Heart left ventricle (tissue), 16 donors: ENCODE measurements at regions of chr3 and their contacts with region 1.

Region 1: GRCh38 chr3:47380601-47381316 is at the start of gene PTPN23:
- DNase-seq: peak; percentile 99 to 100 (median 99)
- ATAC-seq: peak; percentile 92 to 95 (median 93)
- H3K4me3 ChIP-seq: peak within 1 kb of the TSS; percentile 54 to 97 (median 80)
- H3K27ac ChIP-seq: peak within 1 kb of the TSS; percentile 78 to 98 (median 93)
- H3K4me1 ChIP-seq: peaks cover 0 to 50% (median 25%) of the 10 kb centered on the region in 12 donors
- H3K27me3 ChIP-seq: no peaks in the 10 kb centered on the region
- CTCF ChIP-seq: no peak
- POLR2A ChIP-seq: peak; percentile 40 to 92
- total RNA-seq, gene PTPN23: 13.0 to 30.3 (median 19.5) TPM

Region 2: DNA sequence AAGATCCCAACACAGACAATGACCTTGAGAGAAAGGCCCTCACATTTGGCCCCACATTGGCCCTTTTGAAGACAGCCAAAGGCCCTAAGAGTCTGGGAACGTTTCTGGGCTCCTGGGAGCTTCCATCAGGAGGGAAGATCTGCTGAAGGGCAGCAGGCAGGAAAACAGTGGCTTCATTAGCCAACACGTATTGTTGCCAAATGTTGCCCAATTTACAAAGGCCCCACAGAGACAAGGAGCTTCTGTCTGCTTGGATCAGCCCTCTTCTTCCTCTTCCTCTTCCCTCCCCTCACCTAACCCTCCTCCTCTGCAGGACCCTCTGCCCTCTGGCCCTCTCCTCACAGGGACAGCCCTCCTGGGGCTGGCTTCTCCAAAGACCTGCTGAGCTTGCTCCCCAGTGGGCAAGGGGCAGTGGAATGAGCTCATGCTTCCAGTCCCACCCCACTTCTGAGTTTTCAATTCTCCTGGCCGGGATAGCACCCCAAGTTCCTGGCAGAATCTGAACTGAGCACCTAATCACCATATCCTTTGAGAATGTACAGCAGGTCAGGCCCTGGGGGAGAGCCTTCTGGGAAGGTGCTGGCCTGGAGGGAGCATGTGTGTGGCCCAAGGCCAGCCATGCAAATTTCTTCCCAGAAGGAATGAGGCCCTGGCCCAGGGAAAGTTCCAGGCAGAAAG is 910.9 kb before region 1 on chr3:
- intact Hi-C with region 1: no loop called
- DNase-seq: peak in 1 of 5 donors; percentile 9
- ATAC-seq: peak in 2 of 4 donors; percentile 4 to 6
- H3K4me3 ChIP-seq: no peak overlapping the region
- H3K27ac ChIP-seq: peak overlapping the region in 1 of 12 donors; percentile 77
- H3K4me1 ChIP-seq: peaks cover 0 to 40% (median 19%) of the 10 kb centered on the region in 12 donors
- H3K27me3 ChIP-seq: peaks cover 0 to 7% (median 0%) of the 10 kb centered on the region in 9 donors
- CTCF ChIP-seq: no peak
- POLR2A ChIP-seq: no peak

Region 3: GRCh38 chr3:47261301-47261700 is 119.5 kb before region 1 on chr3:
- intact Hi-C with region 1: no loop called
- DNase-seq: peak in 1 of 5 donors; percentile 10
- ATAC-seq: no peak
- H3K4me3 ChIP-seq: no peak overlapping the region
- H3K27ac ChIP-seq: no peak overlapping the region
- H3K4me1 ChIP-seq: peaks cover 0 to 9% (median 0%) of the 10 kb centered on the region in 12 donors
- H3K27me3 ChIP-seq: no peaks in the 10 kb centered on the region
- CTCF ChIP-seq: no peak
- POLR2A ChIP-seq: no peak

Region 4: DNA sequence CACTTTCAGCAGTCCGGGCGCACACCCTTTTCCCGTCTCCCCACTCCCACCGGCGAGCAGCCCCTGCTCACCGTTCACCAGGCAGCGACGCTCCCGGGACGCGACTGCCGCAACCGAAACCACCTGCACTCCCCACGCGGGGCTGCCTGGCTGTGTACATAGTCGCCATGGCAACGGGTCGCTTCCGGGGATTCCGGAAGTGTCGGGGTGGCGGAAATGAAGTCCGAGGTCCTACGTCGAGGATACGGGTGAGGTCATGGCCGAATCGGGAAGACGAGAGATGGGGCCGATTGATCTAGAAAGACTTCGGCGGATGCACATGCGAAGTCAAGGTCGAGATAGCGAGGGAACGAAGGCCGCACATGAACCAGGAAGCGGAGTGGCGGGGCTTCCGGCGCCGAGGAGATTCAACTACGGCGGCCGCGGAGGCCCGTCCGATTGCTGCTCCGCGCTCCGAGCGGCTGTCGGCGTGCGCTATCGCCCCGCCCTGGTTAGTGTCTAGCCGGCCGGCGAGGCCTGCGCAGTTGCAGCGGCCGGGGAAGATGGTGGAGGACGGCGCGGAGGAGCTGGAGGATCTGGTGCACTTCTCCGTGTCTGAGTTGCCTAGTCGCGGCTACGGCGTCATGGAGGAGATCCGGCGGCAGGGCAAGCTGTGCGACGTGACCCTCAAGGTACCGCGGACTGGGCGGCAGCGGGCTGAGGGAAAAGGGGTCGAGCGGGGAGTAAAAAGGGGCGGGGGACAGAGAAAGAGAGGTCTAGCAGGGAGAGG is 98.2 kb before region 1 on chr3 and contains the starts of genes KIF9 and KLHL18:
- intact Hi-C with region 1: loop called in 1 of 10 experiments (anchors 5 kb)
- DNase-seq: peak; percentile 94 to 97 (median 95)
- ATAC-seq: peak; percentile 91 to 98 (median 97)
- H3K4me3 ChIP-seq: peak within 1 kb of the TSS; percentile 66 to 90 (median 84)
- H3K27ac ChIP-seq: peak within 1 kb of the TSS; percentile 66 to 98 (median 94)
- H3K4me1 ChIP-seq: peaks cover 7 to 48% (median 30%) of the 10 kb centered on the region in 12 donors
- H3K27me3 ChIP-seq: no peaks in the 10 kb centered on the region
- CTCF ChIP-seq: peak in 1 of 12 donors; percentile 31
- POLR2A ChIP-seq: peak in 1 of 2 donors; percentile 42
- total RNA-seq, gene KIF9: 5.2 to 13.0 (median 8.6) TPM
- total RNA-seq, gene KLHL18: 15.2 to 51.0 (median 43.5) TPM

Region 5: DNA sequence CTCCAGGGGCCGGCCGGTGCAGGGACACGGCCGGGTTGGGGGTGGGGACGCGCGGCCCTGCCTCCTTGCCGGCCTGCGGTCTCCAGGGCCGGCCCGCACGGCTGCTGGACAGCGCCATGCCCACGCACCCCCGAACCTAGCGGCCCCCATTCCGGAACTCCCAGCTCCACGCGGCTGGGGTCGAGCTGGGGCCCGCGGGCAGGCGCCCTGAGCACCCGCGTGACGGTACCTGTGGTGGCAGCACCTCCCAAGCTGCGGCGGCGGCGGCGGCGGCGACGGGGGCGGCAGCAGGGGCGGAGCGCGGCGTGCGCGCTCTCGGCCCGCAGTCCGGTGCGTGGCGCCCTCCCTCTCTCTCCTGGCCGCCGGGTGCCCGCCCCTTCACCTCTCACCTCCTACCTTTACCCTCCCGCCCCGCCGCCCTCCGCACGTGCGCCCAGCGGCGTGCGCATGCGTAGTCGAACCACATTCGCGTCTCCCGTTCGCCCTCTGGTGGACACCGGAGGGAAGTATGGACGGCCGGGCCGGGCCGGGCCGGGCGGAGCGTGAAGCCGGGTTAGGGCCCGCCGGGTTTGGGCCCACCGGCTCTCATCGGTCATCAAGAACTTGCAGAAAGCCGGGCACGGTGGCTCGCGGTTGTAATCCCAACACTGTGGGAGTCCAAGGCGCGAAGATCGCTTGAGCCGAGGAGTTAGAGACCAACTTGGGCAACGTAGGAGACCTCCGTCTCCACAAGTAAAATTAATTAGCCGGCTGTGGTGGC is 95.0 kb after region 1 on chr3 and contains the start of gene SCAP:
- intact Hi-C with region 1: loop called in 1 of 10 experiments (anchors 5 kb)
- DNase-seq: peak; percentile 93 to 97 (median 95)
- ATAC-seq: peak; percentile 91 to 97 (median 97)
- H3K4me3 ChIP-seq: peak within 1 kb of the TSS; percentile 69 to 100 (median 95)
- H3K27ac ChIP-seq: peak within 1 kb of the TSS; percentile 54 to 93 (median 85)
- H3K4me1 ChIP-seq: peaks cover 0 to 30% (median 16%) of the 10 kb centered on the region in 12 donors
- H3K27me3 ChIP-seq: no peaks in the 10 kb centered on the region
- CTCF ChIP-seq: peak; percentile 89 to 98 (median 96)
- POLR2A ChIP-seq: peak in 1 of 2 donors; percentile 76
- total RNA-seq, gene SCAP: 37.2 to 71.6 (median 41.8) TPM

Region 6: DNA sequence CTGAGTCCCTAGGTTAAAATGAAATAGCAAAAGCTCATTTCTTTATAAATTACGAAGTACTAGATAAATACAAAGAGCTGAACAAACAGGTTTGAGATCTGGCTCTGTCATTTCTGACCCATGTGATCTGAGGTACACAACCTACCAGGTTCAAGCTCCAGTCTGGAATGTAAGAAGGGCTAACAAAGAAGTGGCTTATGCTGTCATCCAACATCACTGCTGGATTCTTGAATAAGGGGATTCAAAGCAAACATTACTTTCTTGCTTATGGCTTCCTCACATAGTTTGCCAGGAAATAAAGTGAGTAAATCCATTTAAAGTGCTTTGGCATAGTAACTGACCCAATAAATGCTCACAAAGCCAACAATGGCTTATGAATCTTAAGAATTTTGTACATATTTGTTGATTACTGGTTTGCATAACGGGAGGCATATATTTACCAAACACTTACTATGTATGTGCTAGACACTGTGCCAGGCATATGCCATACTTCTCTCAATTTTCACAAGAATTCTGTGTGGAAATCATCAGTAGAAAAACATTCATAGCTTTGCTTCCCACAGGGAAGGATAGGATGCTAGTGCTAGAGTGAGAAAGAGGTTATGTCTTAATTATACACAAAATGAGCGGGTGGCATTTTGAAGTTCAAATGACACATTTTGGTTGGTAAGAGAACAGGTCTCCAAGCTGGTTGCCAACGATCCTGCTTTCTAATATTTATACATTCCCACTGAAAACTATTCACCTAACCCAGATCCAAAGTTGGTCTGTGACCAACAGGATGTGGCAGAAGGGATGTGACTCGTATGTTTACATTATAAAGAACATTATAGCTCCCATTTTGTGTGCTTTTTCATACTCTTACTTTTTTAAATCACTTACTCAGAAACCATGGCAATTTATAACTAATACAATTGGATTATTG is 236.6 kb after region 1 on chr3:
- intact Hi-C with region 1: no loop called
- DNase-seq: no peak
- ATAC-seq: no peak
- H3K4me3 ChIP-seq: no peak overlapping the region
- H3K27ac ChIP-seq: no peak overlapping the region
- H3K4me1 ChIP-seq: peaks cover 0 to 16% (median 6%) of the 10 kb centered on the region in 12 donors
- H3K27me3 ChIP-seq: no peaks in the 10 kb centered on the region
- CTCF ChIP-seq: no peak
- POLR2A ChIP-seq: no peak